ENCODE measurements at regions of chr15 and their contacts with region 1.

Region 1: GRCh38 chr15:38389924-38390542 is 63.9 kb upstream of the FAM98B start:
- DNase-seq: peak; percentile 28 to 70 (median 58)
- ATAC-seq: no peak
- H3K4me3 ChIP-seq: no peak overlapping the region
- H3K4me3 Mint-ChIP-seq: no peak overlapping the region
- H3K27ac ChIP-seq: no peak overlapping the region
- H3K27ac Mint-ChIP-seq: no peak overlapping the region
- H3K4me1 ChIP-seq: no peaks in the 10 kb centered on the region
- H3K4me1 Mint-ChIP-seq: no peaks in the 10 kb centered on the region
- H3K27me3 ChIP-seq: peaks cover 0 to 2% of the 10 kb centered on the region in 2 experiments
- H3K27me3 Mint-ChIP-seq: peaks cover 15% of the 10 kb centered on the region
- CTCF ChIP-seq: peak; percentile 85

Region 2: GRCh38 chr15:38252481-38253412 is 137.3 kb before region 1 on chr15 and contains the start of gene SPRED1:
- CTCF ChIA-PET with region 1: no interaction called
- POLR2A ChIA-PET with region 1: no interaction called
- intact Hi-C with region 1: loop called in 1 of 2 experiments (anchors 10 kb)
- DNase-seq: peak in 7 of 9 experiments; percentile 1 to 50 (median 32)
- ATAC-seq: peak; percentile 13
- H3K4me3 ChIP-seq: peak within 1 kb of the TSS; percentile 75 to 85
- H3K4me3 Mint-ChIP-seq: peak within 1 kb of the TSS; percentile 84
- H3K27ac ChIP-seq: no peak within 1 kb of the TSS
- H3K27ac Mint-ChIP-seq: no peak within 1 kb of the TSS
- H3K4me1 ChIP-seq: peaks cover 21% of the 10 kb centered on the region
- H3K4me1 Mint-ChIP-seq: peaks cover 26% of the 10 kb centered on the region
- H3K27me3 ChIP-seq: no peaks in the 10 kb centered on the region
- H3K27me3 Mint-ChIP-seq: peaks cover 10% of the 10 kb centered on the region
- CTCF ChIP-seq: no peak
- total RNA-seq, gene SPRED1: 0.05 to 0.50 TPM

Region 3: GRCh38 chr15:38374556-38374955 is 15.5 kb before region 1 on chr15:
- CTCF ChIA-PET with region 1: interaction called, 15 read pairs
- POLR2A ChIA-PET with region 1: no interaction called
- intact Hi-C with region 1: no loop called
- DNase-seq: no peak
- ATAC-seq: no peak
- H3K4me3 ChIP-seq: no peak overlapping the region
- H3K4me3 Mint-ChIP-seq: no peak overlapping the region
- H3K27ac ChIP-seq: no peak overlapping the region
- H3K27ac Mint-ChIP-seq: no peak overlapping the region
- H3K4me1 ChIP-seq: no peaks in the 10 kb centered on the region
- H3K4me1 Mint-ChIP-seq: no peaks in the 10 kb centered on the region
- H3K27me3 ChIP-seq: no peaks in the 10 kb centered on the region
- H3K27me3 Mint-ChIP-seq: peaks cover 33% of the 10 kb centered on the region
- CTCF ChIP-seq: no peak

Region 4: GRCh38 chr15:38941399-38941953 is 551.4 kb after region 1 on chr15:
- CTCF ChIA-PET with region 1: no interaction called
- POLR2A ChIA-PET with region 1: no interaction called
- intact Hi-C with region 1: no loop called
- DNase-seq: no peak
- ATAC-seq: no peak
- H3K4me3 ChIP-seq: no peak overlapping the region
- H3K4me3 Mint-ChIP-seq: no peak overlapping the region
- H3K27ac ChIP-seq: no peak overlapping the region
- H3K27ac Mint-ChIP-seq: no peak overlapping the region
- H3K4me1 ChIP-seq: no peaks in the 10 kb centered on the region
- H3K4me1 Mint-ChIP-seq: no peaks in the 10 kb centered on the region
- H3K27me3 ChIP-seq: no peaks in the 10 kb centered on the region
- H3K27me3 Mint-ChIP-seq: peaks cover 18% of the 10 kb centered on the region
- CTCF ChIP-seq: no peak

Measured in CD8-positive, alpha-beta T cell (primary cell).